ENCODE measurements at regions of chrX and their contacts with region 1.

Region 1: GRCh38 chrX:56729152-56729850 is at the start of gene NBDY:
- DNase-seq: peak; percentile 16 to 54 (median 38)
- ATAC-seq: peak; percentile 80 to 98 (median 96)
- H3K4me3 ChIP-seq: peak within 1 kb of the TSS; percentile 37 to 84 (median 68)
- H3K27ac ChIP-seq: peak within 1 kb of the TSS; percentile 62 to 87 (median 80)
- H3K4me1 ChIP-seq: peaks cover 0 to 22% (median 4%) of the 10 kb centered on the region in 12 donors
- H3K27me3 ChIP-seq: peaks cover 0 to 37% (median 0%) of the 10 kb centered on the region in 9 donors
- CTCF ChIP-seq: no peak
- POLR2A ChIP-seq: no peak
- total RNA-seq, gene NBDY: 10.4 to 32.3 (median 26.2) TPM

Region 2: DNA sequence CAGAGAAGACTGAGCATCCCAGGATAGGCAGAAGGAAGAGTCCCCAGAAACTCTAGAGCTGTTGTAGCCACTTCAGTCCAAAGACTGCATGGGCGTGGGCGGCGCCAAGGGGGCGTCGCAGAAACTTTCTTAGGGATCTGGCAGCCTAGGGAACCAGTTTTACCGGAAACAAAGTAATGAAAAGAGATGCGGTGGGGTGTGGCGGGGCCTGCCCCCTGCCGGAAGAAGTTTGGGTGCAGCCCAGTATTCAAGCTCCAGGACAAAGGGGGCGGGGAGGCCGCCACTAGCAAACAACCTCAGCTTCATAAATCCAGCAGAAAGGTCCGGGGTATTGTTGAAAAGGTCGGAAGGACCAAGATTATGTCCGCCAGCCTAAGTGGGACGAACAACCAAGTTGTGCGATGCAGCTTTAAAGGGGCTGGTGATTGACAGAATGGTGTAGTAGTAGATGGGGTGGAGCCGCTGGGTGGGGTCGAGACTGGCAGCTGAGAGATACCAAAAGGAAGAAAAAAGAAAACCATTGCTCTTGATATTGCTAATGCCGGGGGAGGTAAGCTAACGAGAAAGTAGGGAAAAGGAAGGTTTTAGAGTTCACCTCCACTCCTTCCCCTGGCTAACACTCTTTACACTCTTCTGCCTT is 821.2 kb before region 1 on chrX:
- intact Hi-C with region 1: loop called in 1 of 10 experiments (anchors 5 kb)
- DNase-seq: peak; percentile 32 to 67 (median 49)
- ATAC-seq: peak; percentile 32 to 89 (median 76)
- H3K4me3 ChIP-seq: peak overlapping the region; percentile 25 to 86 (median 66)
- H3K27ac ChIP-seq: peak overlapping the region; percentile 12 to 71 (median 57)
- H3K4me1 ChIP-seq: peaks cover 0 to 5% (median 0%) of the 10 kb centered on the region in 12 donors
- H3K27me3 ChIP-seq: peaks cover 0 to 3% (median 0%) of the 10 kb centered on the region in 9 donors
- CTCF ChIP-seq: peak in 11 of 12 donors; percentile 24 to 60 (median 45)
- POLR2A ChIP-seq: no peak

Region 3: DNA sequence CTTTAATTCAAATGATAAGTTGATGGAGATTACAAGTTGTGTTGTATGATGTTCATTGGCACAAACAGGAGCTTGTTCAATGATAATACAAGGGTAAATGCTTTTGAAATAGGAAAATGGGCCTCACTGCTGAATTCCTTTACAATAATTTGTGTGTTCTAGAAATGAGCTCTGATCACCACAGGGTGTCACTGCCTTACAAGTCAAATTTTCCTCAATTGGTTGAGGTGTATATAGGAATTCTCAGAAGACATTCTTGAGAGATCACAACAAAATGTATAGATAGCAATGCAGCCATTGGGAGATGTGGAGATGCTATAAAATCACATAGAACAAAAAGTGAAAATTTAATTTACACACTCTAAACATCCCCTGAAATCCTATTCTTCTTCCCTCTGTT is 447.5 kb before region 1 on chrX:
- intact Hi-C with region 1: loop called in 6 of 10 experiments (anchors 5 to 10 kb)
- DNase-seq: no peak
- ATAC-seq: no peak
- H3K4me3 ChIP-seq: no peak overlapping the region
- H3K27ac ChIP-seq: no peak overlapping the region
- H3K4me1 ChIP-seq: no peaks in the 10 kb centered on the region
- H3K27me3 ChIP-seq: no peaks in the 10 kb centered on the region
- CTCF ChIP-seq: peak in 5 of 12 donors; percentile 8 to 26 (median 19)
- POLR2A ChIP-seq: no peak

Region 4: GRCh38 chrX:56462389-56462788 is 266.9 kb before region 1 on chrX:
- intact Hi-C with region 1: loop called in 2 of 10 experiments (anchors 5 to 10 kb)
- DNase-seq: no peak
- ATAC-seq: no peak
- H3K4me3 ChIP-seq: no peak overlapping the region
- H3K27ac ChIP-seq: no peak overlapping the region
- H3K4me1 ChIP-seq: no peaks in the 10 kb centered on the region
- H3K27me3 ChIP-seq: peaks cover 0 to 4% (median 0%) of the 10 kb centered on the region in 9 donors
- CTCF ChIP-seq: peak in 2 of 12 donors; percentile 16 to 33
- POLR2A ChIP-seq: no peak

Region 5: DNA sequence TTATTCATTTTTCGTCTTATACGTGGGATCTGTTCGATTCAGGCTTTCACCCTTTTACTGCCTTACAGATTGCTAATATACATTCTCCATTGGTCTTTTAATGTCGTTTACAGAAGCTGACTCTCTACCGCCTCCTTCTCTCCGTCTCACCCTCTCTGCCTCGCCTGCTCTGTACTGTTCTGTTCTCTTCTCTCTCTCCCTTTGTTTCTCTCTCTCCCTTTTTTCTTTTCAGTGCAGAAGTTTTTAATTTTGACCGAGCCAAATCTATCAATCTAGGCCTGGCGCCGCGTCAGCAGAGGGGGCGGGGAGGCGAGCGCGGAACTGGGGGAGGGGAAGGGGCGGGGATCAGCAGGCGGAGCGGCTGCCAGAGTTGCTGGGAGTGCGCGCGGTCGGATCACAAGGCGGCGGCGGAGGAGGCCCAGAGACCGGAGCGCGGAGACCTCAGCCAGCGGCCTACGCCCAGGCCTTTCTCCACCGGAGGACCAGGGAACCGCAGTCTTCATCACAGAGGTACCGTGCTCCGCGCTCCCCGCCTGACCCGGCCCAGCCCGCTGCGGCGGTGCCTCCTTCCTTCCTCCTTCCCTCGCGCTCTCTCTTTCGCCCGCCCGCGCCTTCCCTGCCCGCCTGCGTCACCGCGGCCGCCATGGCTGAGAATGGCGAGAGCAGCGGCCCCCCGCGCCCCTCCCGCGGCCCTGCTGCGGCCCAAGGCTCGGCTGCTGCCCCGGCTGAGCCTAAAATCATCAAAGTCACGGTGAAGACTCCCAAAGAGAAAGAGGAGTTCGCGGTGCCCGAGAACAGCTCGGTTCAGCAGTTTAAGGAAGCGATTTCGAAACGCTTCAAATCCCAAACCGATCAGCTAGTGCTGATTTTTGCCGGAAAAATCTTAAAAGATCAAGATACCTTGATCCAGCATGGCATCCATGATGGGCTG is 165.8 kb before region 1 on chrX and contains the start of gene UBQLN2:
- intact Hi-C with region 1: loop called in 2 of 10 experiments (anchors 5 kb)
- DNase-seq: peak; percentile 85 to 90 (median 86)
- ATAC-seq: peak; percentile 94 to 98 (median 98)
- H3K4me3 ChIP-seq: peak within 1 kb of the TSS; percentile 28 to 88 (median 72)
- H3K27ac ChIP-seq: peak within 1 kb of the TSS; percentile 90 to 99 (median 94)
- H3K4me1 ChIP-seq: peaks cover 0 to 35% (median 14%) of the 10 kb centered on the region in 12 donors
- H3K27me3 ChIP-seq: peaks cover 0 to 3% (median 0%) of the 10 kb centered on the region in 9 donors
- CTCF ChIP-seq: peak in 5 of 12 donors; percentile 12 to 34 (median 28)
- POLR2A ChIP-seq: peak in 1 of 2 donors; percentile 60
- total RNA-seq, gene UBQLN2: 26.9 to 41.8 (median 34.4) TPM

Region 6: GRCh38 chrX:56788717-56789122 is 59.4 kb after region 1 on chrX:
- intact Hi-C with region 1: no loop called
- DNase-seq: peak in 1 of 5 donors; percentile 78
- ATAC-seq: peak in 1 of 4 donors; percentile 87
- H3K4me3 ChIP-seq: peak overlapping the region in 3 of 12 donors; percentile 14 to 48 (median 41)
- H3K27ac ChIP-seq: peak overlapping the region in 3 of 12 donors; percentile 54 to 71 (median 63)
- H3K4me1 ChIP-seq: peaks cover 0 to 21% (median 0%) of the 10 kb centered on the region in 12 donors
- H3K27me3 ChIP-seq: no peaks in the 10 kb centered on the region
- CTCF ChIP-seq: peak in 3 of 12 donors; percentile 46 to 52 (median 47)
- POLR2A ChIP-seq: no peak

Region 7: GRCh38 chrX:56813318-56813837 is 84.1 kb after region 1 on chrX:
- intact Hi-C with region 1: no loop called
- DNase-seq: no peak
- ATAC-seq: peak in 3 of 4 donors; percentile 66 to 80 (median 73)
- H3K4me3 ChIP-seq: peak overlapping the region in 3 of 12 donors; percentile 37 to 43 (median 42)
- H3K27ac ChIP-seq: peak overlapping the region in 8 of 12 donors; percentile 3 to 82 (median 40)
- H3K4me1 ChIP-seq: peaks cover 0 to 18% (median 2%) of the 10 kb centered on the region in 12 donors
- H3K27me3 ChIP-seq: peaks cover 0 to 18% (median 0%) of the 10 kb centered on the region in 9 donors
- CTCF ChIP-seq: no peak
- POLR2A ChIP-seq: no peak